Left ventricle myocardium inferior (tissue), 1 donor: ENCODE measurements at regions of chr7 and their contacts with region 1.

Region 1: DNA sequence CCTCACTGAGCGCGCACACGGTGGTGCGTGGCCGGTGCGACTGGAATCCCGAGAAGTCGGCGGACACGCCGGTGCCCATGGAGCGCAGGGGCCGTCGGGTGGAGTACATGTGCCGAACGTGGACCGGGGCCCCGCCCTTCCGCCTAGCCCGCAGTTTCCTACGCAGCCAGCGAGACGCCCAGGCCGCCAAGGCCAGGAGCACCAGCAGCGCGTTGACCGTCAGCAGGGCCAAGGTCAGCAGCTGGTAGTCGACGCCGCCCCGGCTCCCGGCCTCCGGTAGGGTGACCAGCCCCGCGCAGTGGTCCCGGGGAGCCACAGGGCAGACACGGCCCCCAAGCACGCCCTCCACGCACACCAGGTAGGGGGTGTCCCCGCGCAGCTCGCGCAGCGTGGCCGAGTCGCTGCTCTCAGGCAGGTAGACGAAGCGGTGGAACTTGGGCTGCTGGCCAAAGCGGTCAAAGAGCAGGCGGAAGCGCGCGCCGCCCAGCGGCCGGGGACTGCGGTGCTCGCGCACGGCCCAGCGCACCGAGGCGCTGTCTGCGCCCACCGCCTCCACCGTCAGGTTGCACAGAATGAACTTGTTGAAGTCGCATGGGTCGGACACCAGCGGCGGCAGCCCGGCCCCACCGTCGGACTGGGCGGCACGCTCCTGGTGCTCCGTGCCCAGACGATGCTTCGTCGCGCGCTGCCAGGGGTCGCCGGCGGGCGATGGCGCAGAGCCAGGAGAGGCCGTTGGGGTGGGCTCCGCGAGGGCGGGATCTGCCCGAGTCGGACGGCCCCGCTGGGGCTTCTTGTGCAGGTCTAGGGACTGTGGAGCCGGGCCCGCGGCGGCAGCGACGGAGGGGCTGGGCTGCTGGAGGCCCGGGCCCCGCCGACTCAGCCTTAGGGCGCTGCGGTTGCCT is 2.2 kb downstream of the TRIL start:
- DNase-seq: peak; percentile 81
- H3K4me3 ChIP-seq: peak overlapping the region; percentile 72
- H3K27ac ChIP-seq: peak overlapping the region; percentile 78
- H3K4me1 ChIP-seq: peaks cover 61% of the 10 kb centered on the region
- H3K27me3 ChIP-seq: no peaks in the 10 kb centered on the region
- CTCF ChIP-seq: peak; percentile 62

Region 2: GRCh38 chr7:28872226-28872625 is 83.7 kb before region 1 on chr7:
- intact Hi-C with region 1: no loop called
- DNase-seq: no peak
- H3K4me3 ChIP-seq: no peak overlapping the region
- H3K27ac ChIP-seq: no peak overlapping the region
- H3K4me1 ChIP-seq: no peaks in the 10 kb centered on the region
- H3K27me3 ChIP-seq: no peaks in the 10 kb centered on the region
- CTCF ChIP-seq: no peak

Region 3: DNA sequence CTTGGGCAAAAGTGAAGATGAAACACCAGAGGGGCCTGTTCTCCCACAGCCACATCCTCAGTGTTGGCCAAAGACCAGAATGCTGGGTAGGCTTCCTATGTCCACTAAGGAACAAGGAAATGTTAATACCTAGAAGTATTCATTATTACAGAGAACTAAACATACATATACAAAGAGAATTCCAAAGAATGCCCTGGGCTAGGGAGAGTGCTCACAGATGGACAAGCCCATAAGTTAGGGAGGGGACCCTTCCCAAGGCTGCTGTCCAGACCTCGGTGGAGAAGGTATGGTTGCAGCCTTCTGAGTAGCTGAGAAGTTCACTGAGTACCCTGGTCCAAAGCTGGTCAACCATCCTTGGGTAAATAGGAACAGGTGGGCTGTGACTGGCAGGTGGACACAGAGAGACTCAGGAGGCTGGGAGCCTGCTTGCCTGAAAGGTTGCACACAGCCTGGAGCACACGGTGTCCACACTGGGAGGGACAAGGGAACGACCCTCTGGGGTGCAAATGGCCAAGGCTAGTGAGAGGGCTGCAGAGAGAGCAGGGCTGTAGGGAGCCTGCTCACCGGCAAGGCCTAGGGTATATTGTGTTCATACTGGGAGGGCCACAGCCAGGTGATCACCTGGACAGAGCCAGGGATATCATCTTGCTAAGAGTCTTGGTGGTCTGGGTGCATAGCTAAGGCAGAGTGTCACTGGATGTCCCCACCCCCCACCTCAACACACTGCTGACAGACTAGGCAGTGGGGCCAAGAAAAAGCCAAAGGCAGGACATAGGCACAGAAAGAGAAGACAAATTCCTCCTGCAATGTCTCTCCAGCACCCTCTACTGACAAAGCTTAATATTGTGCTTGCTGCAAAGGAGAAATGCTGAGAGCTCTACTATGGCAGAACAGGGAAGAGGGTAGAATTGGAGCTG is 150.0 kb after region 1 on chr7:
- intact Hi-C with region 1: loop called (anchors 10 kb)
- DNase-seq: no peak
- H3K4me3 ChIP-seq: no peak overlapping the region
- H3K27ac ChIP-seq: no peak overlapping the region
- H3K4me1 ChIP-seq: peaks cover 26% of the 10 kb centered on the region
- H3K27me3 ChIP-seq: no peaks in the 10 kb centered on the region
- CTCF ChIP-seq: peak; percentile 93